BJ (cell line): ENCODE measurements at regions of chr14 and their contacts with region 1.

Region 1: DNA sequence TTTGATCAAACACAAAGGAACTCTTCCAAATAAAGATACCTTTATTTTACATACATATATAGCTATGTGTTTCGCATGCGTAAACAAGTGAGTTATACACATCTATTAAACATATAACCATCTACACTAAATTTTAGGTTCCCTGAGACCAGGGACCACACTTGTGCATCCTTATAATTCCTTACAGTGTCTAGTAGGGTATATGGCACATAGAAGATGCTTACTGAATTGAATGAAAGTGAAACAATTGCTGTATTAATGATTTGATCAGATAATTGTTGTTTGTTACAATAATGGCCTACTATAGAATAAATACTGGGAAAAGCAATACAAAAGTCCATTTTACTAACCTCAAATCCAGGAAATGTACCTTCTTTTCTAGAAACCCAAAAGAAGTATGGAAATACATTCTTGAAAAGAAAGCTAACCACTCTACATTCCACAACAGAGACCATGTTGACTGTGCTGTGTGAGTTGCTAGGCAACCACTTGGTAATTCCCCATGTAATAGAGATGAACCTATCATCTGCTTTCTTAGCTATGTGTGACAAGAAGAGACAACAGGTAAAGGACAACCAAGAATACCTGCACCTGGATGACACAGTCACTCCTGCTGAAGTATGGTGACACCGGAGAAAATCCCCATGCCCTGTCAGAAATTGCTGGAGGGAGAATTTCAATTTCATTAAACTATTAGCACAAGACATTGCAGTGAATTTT is 11.9 kb upstream of the CIPC start:
- DNase-seq: no peak
- H3K4me3 ChIP-seq: no peak overlapping the region
- H3K27me3 ChIP-seq: peaks cover 7% of the 10 kb centered on the region
- CTCF ChIP-seq: no peak

Region 2: DNA sequence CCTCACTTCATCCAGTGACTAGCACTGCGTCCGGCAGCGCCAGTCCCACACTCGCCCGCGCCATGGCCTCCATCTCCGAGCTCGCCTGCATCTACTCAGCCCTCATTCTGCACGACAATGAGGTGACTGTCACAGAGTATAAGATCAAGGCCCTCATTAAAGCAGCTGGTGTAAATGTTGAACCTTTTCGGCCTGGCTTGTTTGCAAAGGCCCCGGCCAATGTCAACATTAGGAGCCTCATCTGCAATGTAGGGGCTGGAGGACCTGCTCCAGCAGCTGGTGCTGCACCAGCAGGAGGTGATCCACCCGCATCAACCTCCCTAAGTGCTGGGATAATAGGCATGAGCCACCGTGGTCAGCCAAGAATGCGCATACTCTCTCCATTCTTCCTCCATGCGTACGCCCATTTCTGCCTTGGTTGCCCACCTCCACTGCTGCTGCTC is 117.5 kb before region 1 on chr14:
- CTCF ChIA-PET with region 1: no interaction called
- POLR2A ChIA-PET with region 1: no interaction called
- DNase-seq: no peak
- H3K4me3 ChIP-seq: no peak overlapping the region
- H3K27me3 ChIP-seq: no peaks in the 10 kb centered on the region
- CTCF ChIP-seq: no peak

Region 3: DNA sequence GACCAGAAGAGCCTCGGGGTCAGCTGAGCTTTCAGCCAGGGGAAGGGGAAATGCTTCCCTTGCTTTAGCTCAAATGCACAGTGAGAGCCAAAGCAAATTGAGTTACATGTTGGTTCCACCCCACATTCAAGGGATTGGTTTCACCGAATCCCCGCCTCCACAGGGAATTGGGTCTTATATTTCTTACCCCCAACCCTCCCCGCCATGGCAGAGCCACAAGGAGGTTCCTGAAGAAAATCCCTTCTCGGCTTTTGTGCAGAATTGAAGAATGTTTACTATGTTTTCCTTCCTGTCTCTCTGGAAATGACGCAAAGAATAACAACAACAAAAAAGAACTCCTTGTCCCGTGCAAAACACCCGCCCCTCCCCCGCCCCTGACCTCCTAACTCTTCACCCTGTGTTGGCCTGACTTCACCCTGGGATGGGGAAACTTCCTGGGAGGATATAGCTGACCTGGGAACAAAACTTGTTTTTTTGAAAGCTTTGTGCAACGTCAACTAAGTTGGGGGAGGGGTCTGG is 10.0 kb before region 1 on chr14:
- CTCF ChIA-PET with region 1: interaction called, 74 read pairs
- POLR2A ChIA-PET with region 1: interaction called, 3 read pairs
- DNase-seq: no peak
- H3K4me3 ChIP-seq: no peak overlapping the region
- H3K27me3 ChIP-seq: no peaks in the 10 kb centered on the region
- CTCF ChIP-seq: no peak

Region 4: GRCh38 chr14:77105145-77105939 is 19.2 kb after region 1 on chr14:
- CTCF ChIA-PET with region 1: no interaction called
- POLR2A ChIA-PET with region 1: no interaction called
- DNase-seq: no peak
- H3K4me3 ChIP-seq: no peak overlapping the region
- H3K27me3 ChIP-seq: no peaks in the 10 kb centered on the region
- CTCF ChIP-seq: no peak